ENCODE measurements at regions of chr19 and their contacts with region 1.

Region 1: GRCh38 chr19:7550987-7551761 is 15.7 kb downstream of the PNPLA6 start:
- DNase-seq: peak; percentile 90
- H3K4me3 ChIP-seq: peak overlapping the region; percentile 7 to 38 (median 30)
- H3K27ac ChIP-seq: peak overlapping the region; percentile 46 to 62 (median 58)
- H3K4me1 ChIP-seq: peaks cover 0 to 11% (median 11%) of the 10 kb centered on the region in 4 donors
- H3K27me3 ChIP-seq: no peaks in the 10 kb centered on the region
- CTCF ChIP-seq: no peak
- EP300 ChIP-seq: no peak
- POLR2A ChIP-seq: no peak

Region 2: GRCh38 chr19:7535035-7535992 is 15.9 kb before region 1 on chr19 and contains the start of gene PNPLA6:
- intact Hi-C with region 1: loop called (anchors 1 kb)
- DNase-seq: peak; percentile 98
- H3K4me3 ChIP-seq: peak within 1 kb of the TSS; percentile 72 to 89 (median 84)
- H3K27ac ChIP-seq: peak within 1 kb of the TSS; percentile 87 to 97 (median 96)
- H3K4me1 ChIP-seq: peaks cover 0 to 27% (median 16%) of the 10 kb centered on the region in 4 donors
- H3K27me3 ChIP-seq: no peaks in the 10 kb centered on the region
- CTCF ChIP-seq: no peak
- EP300 ChIP-seq: no peak
- POLR2A ChIP-seq: peak; percentile 46 to 69
- total RNA-seq, gene PNPLA6: 35.2 to 77.0 (median 44.1) TPM

Measured in sigmoid colon (tissue), 7 donors.